Dendritic cell treated with granulocyte-macrophage colony-stimulating factor and Interleukin-4, amounts not matched to agents 40 ng/mL and 50 ng/mL, for 4 days (primary cell): ENCODE measurements at regions of chr20 and their contacts with region 1.

Region 1: DNA sequence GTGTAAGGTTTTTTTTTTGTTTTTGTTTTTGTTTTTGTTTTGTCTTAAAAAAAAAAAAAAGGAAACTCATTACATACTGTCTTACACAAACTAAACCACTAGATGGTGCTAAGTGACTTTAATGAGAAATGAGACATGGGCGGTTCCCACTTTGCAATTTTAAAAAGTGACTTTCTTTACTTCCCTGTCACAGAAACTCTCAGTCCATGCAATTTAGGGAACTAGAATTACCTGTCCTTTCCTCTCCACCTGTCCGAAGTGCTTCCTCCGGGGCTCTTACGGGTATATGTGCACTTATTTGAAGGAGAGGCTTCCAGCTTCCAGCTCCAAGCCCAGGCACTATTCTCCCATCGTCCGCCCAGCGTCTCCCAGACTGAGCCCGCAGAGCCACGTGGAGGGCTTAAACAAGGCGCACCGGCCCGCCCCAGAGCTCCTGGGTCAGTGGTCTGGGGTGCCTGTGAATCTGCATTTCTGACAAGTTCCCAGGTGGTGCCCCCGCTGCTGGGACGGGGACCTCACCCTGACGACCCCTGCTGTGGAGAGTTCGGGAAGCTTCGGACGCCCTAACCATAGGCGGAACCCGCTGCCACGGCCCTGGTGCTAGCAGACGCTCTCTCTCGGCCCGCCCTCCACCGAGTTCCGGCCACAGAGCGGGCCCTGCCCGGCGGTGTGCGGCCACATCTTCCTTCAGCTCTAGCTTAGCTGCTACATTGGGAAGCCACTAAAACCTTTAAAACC is 26.1 kb downstream of the BFSP1 start:
- H3K4me3 Mint-ChIP-seq: peak overlapping the region; percentile 79
- H3K27ac Mint-ChIP-seq: peak overlapping the region; percentile 68
- H3K4me1 Mint-ChIP-seq: peaks cover 21% of the 10 kb centered on the region
- H3K27me3 Mint-ChIP-seq: peaks cover 7% of the 10 kb centered on the region

Region 2: GRCh38 chr20:17898548-17898994 is 393.5 kb after region 1 on chr20:
- intact Hi-C with region 1: loop called (anchors 10 kb)
- H3K4me3 Mint-ChIP-seq: no peak overlapping the region
- H3K27ac Mint-ChIP-seq: no peak overlapping the region
- H3K4me1 Mint-ChIP-seq: peaks cover 24% of the 10 kb centered on the region
- H3K27me3 Mint-ChIP-seq: peaks cover 42% of the 10 kb centered on the region

Region 3: GRCh38 chr20:18276821-18277220 is 771.8 kb after region 1 on chr20:
- intact Hi-C with region 1: loop called (anchors 1 kb)
- H3K4me3 Mint-ChIP-seq: no peak overlapping the region
- H3K27ac Mint-ChIP-seq: no peak overlapping the region
- H3K4me1 Mint-ChIP-seq: no peaks in the 10 kb centered on the region
- H3K27me3 Mint-ChIP-seq: peaks cover 17% of the 10 kb centered on the region